MCF 10A (cell line): ENCODE measurements at regions of chr11 and their contacts with region 1.

Region 1: GRCh38 chr11:122895563-122895962 is 13.0 kb downstream of the JHY start:
- DNase-seq: no peak
- H3K4me3 Mint-ChIP-seq: no peak overlapping the region
- H3K27ac Mint-ChIP-seq: no peak overlapping the region
- H3K4me1 Mint-ChIP-seq: peaks cover 6% of the 10 kb centered on the region
- H3K27me3 Mint-ChIP-seq: no peaks in the 10 kb centered on the region
- CTCF ChIP-seq: no peak

Region 2: DNA sequence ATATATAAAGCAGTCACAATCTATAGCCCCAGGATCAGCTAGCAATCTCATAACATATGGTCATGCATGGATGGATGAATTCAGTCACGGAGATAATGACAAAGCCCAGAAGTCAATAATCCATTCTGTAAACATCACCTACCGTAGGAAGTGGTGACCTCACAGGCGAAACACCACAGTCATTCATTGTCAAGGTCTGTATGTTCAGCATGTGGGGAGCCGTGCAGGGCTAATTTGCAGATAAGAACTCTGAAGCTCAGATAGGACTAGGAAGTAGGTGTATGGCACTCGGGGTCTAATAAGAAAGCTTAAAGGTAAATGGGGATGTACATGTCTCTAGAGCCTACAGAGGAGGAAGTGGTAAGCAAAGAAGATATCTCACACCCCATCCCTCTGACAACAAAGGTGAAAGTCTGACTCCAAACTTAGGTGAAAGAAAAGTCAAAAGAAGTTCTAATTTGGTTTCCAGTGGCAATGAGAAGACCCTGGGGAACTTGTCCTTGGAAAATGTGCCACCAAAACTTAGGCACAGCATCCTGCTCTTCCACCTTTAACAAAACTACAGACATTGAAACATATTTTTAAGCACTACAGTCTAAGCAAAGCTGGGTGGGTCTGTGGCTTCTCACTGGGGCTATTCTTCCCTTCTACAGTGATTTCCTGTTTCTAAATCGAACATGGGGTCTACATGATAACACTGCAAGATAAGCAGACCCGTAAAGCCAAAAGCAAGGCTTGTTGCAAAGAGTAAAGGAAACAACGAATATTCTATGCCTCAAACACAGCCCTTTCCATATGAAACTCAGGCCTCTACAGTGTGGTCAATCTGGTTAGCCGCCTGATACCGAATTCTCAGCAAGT is 52.1 kb before region 1 on chr11:
- CTCF ChIA-PET with region 1: no interaction called
- POLR2A ChIA-PET with region 1: no interaction called
- intact Hi-C with region 1: no loop called
- DNase-seq: no peak
- H3K4me3 Mint-ChIP-seq: no peak overlapping the region
- H3K27ac Mint-ChIP-seq: no peak overlapping the region
- H3K4me1 Mint-ChIP-seq: no peaks in the 10 kb centered on the region
- H3K27me3 Mint-ChIP-seq: no peaks in the 10 kb centered on the region
- CTCF ChIP-seq: no peak

Region 3: GRCh38 chr11:122882857-122883645 is 12.5 kb before region 1 on chr11:
- CTCF ChIA-PET with region 1: interaction called, 3 read pairs
- POLR2A ChIA-PET with region 1: interaction called, 10 read pairs
- intact Hi-C with region 1: no loop called
- DNase-seq: peak; percentile 53
- H3K4me3 Mint-ChIP-seq: peak overlapping the region; percentile 72
- H3K27ac Mint-ChIP-seq: peak overlapping the region; percentile 92
- H3K4me1 Mint-ChIP-seq: peaks cover 7% of the 10 kb centered on the region
- H3K27me3 Mint-ChIP-seq: no peaks in the 10 kb centered on the region
- CTCF ChIP-seq: no peak